Heart right ventricle (tissue), 16 donors: ENCODE measurements at regions of chr9 and their contacts with region 1.

Region 1: DNA sequence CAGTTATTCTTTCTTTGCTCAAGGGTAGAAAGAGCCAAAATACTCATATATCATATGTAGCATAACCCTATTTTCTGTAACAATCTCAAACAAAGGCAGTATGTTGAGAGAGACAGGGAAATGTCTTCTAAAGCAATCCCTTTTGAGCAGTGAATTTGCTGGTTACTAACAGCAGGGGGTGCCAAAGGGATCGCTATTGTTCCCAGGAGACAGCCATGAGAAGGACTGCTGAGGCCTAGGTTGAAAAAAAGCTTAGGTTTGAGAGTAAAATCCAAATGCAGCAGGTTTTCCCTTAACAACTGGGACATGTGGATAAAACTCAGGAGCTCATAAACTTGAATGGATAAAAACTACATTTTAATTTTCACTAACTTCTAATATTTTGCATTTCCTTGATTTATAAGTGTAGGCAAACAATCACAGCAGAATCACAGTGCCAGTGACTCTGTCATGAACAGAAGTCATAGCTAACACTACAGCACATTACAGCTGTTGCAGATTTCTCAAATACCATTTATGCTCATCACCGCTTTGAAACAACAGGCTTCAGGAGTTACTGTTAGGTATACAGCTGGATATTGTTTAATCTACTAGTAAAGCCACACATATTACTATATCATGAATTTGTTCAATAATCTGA is 148.4 kb downstream of the MAPKAP1 start:
- DNase-seq: peak in 1 of 2 donors; percentile 70
- ATAC-seq: peak; percentile 57 to 83 (median 74)
- H3K4me3 ChIP-seq: no peak overlapping the region
- H3K27ac ChIP-seq: peak overlapping the region in 4 of 10 donors; percentile 9 to 35 (median 31)
- H3K4me1 ChIP-seq: peaks cover 0 to 25% (median 7%) of the 10 kb centered on the region in 9 donors
- H3K27me3 ChIP-seq: no peaks in the 10 kb centered on the region
- CTCF ChIP-seq: peak; percentile 40 to 86 (median 77)

Region 2: GRCh38 chr9:125407974-125408900 is 150.3 kb before region 1 on chr9:
- intact Hi-C with region 1: loop called in 1 of 10 experiments (anchors 10 kb)
- DNase-seq: peak; percentile 71 to 84
- ATAC-seq: peak; percentile 86 to 94 (median 90)
- H3K4me3 ChIP-seq: peak overlapping the region; percentile 46 to 83 (median 68)
- H3K27ac ChIP-seq: peak overlapping the region in 5 of 10 donors; percentile 29 to 76 (median 34)
- H3K4me1 ChIP-seq: peaks cover 0 to 13% (median 4%) of the 10 kb centered on the region in 9 donors
- H3K27me3 ChIP-seq: peaks cover 0 to 10% (median 3%) of the 10 kb centered on the region in 7 donors
- CTCF ChIP-seq: peak; percentile 68 to 97 (median 94)

Region 3: GRCh38 chr9:125495172-125496092 is 63.1 kb before region 1 on chr9:
- intact Hi-C with region 1: no loop called
- DNase-seq: no peak
- ATAC-seq: no peak
- H3K4me3 ChIP-seq: no peak overlapping the region
- H3K27ac ChIP-seq: no peak overlapping the region
- H3K4me1 ChIP-seq: peaks cover 0 to 8% (median 0%) of the 10 kb centered on the region in 9 donors
- H3K27me3 ChIP-seq: no peaks in the 10 kb centered on the region
- CTCF ChIP-seq: no peak

Region 4: GRCh38 chr9:125626187-125626586 is 67.6 kb after region 1 on chr9:
- intact Hi-C with region 1: loop called in 7 of 10 experiments (anchors 2 to 10 kb)
- DNase-seq: no peak
- ATAC-seq: no peak
- H3K4me3 ChIP-seq: no peak overlapping the region
- H3K27ac ChIP-seq: no peak overlapping the region
- H3K4me1 ChIP-seq: peaks cover 0 to 27% (median 0%) of the 10 kb centered on the region in 9 donors
- H3K27me3 ChIP-seq: no peaks in the 10 kb centered on the region
- CTCF ChIP-seq: no peak

Region 5: DNA sequence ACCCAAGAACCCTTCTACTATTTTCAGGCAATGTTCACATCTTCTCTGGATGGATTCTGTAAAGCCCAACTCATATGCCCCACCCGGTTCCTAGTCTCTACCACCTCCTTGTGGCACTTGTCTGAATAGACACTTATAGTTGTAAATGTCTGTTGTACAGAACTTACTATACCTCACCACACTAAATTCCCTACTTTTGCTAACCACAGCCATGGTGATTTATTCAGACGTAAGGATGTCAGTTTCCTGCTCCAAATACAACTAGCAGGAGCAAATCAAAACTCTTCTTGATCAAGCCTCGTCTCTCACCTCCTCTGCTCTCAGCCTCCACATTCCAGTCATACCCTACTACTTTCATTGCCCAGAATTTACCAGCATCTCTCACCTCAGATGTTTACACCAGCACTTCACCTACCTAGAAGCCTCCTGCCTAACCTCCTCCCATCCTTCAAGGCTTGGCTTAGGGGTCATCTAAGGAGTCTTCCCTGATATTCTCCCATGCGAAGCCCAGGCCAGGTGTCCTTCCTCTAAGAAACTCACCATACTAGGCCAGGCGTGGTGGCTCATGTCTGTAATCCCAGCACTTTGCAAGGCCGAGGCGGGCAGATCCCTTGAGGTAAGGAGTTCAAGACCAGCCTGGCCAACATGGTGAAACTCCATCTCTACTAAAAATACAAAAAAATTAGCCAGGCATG is 73.0 kb after region 1 on chr9:
- intact Hi-C with region 1: loop called in 7 of 10 experiments (anchors 2 to 10 kb)
- DNase-seq: no peak
- ATAC-seq: peak; percentile 42 to 77 (median 68)
- H3K4me3 ChIP-seq: no peak overlapping the region
- H3K27ac ChIP-seq: peak overlapping the region in 1 of 10 donors; percentile 80
- H3K4me1 ChIP-seq: peaks cover 0 to 80% (median 31%) of the 10 kb centered on the region in 9 donors
- H3K27me3 ChIP-seq: no peaks in the 10 kb centered on the region
- CTCF ChIP-seq: peak; percentile 23 to 74 (median 63)

Region 6: GRCh38 chr9:125746017-125746773 is 187.6 kb after region 1 on chr9:
- intact Hi-C with region 1: loop called in 2 of 10 experiments (anchors 5 to 10 kb)
- DNase-seq: peak; percentile 95 to 96
- ATAC-seq: peak; percentile 94 to 98 (median 96)
- H3K4me3 ChIP-seq: peak overlapping the region; percentile 54 to 90 (median 77)
- H3K27ac ChIP-seq: peak overlapping the region; percentile 65 to 94 (median 85)
- H3K4me1 ChIP-seq: peaks cover 0 to 36% (median 27%) of the 10 kb centered on the region in 9 donors
- H3K27me3 ChIP-seq: no peaks in the 10 kb centered on the region
- CTCF ChIP-seq: no peak

Region 7: DNA sequence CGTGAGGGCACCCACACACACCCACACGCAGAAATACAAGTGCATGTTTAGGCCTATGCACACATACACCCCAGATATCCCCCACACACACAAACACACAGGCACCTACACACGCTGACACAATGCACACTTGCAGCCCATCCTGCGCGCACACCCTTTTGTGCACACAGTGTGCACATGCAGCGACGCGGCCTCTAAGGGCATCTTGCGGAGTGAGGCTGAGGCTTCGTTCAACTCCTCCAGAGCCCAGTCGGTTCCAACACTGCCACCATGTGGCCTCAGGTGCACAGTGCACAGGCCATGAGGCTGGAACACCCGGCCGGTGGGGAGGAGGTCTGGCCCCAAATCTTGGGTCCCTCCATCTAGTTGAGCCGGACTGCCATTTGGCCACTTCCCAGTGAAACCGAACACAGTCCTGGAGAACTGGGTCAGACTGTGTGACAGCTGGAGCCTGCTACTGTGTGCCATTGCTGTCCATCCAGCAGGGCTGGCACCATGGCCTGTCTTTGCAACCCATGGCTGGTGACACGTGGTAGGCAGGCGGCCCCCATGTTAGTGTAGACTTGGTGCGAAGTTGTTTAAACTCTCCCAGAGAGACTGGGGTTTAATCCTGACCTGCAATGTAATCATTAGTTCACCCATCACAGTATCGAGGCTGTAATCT is 670.3 kb after region 1 on chr9:
- intact Hi-C with region 1: loop called in 6 of 10 experiments (anchors 5 to 10 kb)
- DNase-seq: peak; percentile 59 to 71
- ATAC-seq: peak; percentile 87 to 95 (median 90)
- H3K4me3 ChIP-seq: no peak overlapping the region
- H3K27ac ChIP-seq: no peak overlapping the region
- H3K4me1 ChIP-seq: peaks cover 0 to 3% (median 0%) of the 10 kb centered on the region in 9 donors
- H3K27me3 ChIP-seq: peaks cover 0 to 35% (median 14%) of the 10 kb centered on the region in 7 donors
- CTCF ChIP-seq: peak; percentile 80 to 97 (median 90)